HEK293 (cell line): ENCODE measurements at regions of chr2 and their contacts with region 1.

Region 1: GRCh38 chr2:60707750-60708371 is 48.2 kb upstream of the PAPOLG start:
- H3K4me3 ChIP-seq: no peak overlapping the region
- H3K27ac ChIP-seq: no peak overlapping the region
- H3K4me1 ChIP-seq: no peaks in the 10 kb centered on the region
- CTCF ChIP-seq: no peak

Region 2: DNA sequence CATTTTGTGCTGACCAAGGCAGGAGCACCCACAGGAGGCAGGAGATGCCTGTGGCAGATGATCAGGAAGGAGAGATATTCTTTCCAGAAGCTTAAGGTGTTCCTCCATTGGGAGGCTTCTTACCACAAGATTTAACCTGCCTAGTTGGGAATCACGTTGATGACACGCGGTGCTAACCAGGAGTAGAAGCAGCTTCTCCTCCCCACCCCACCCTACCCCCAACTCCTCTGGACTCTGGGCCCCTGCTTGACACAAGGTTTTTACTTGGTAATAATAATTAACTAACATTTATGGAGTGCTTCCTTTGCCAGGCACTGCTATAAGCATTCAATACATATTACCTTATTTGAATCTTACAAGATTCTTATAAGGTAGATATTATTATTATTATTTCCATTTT is 14.3 kb before region 1 on chr2:
- CTCF ChIA-PET with region 1: interaction called, 16 read pairs
- POLR2A ChIA-PET with region 1: no interaction called
- H3K4me3 ChIP-seq: no peak overlapping the region
- H3K27ac ChIP-seq: no peak overlapping the region
- H3K4me1 ChIP-seq: no peaks in the 10 kb centered on the region
- CTCF ChIP-seq: no peak

Region 3: GRCh38 chr2:60794277-60794863 is 86.5 kb after region 1 on chr2:
- CTCF ChIA-PET with region 1: interaction called, 11 read pairs
- POLR2A ChIA-PET with region 1: no interaction called
- H3K4me3 ChIP-seq: no peak overlapping the region
- H3K27ac ChIP-seq: no peak overlapping the region
- H3K4me1 ChIP-seq: no peaks in the 10 kb centered on the region
- CTCF ChIP-seq: peak; percentile 31; the same call in 1 of the 2 replicates